Cardiac septum (tissue), 1 donor: ENCODE measurements at regions of chr1 and their contacts with region 1.

Region 1: GRCh38 chr1:221788466-221788865 is 46.6 kb upstream of the DUSP10 start:
- DNase-seq: no peak

Region 2: DNA sequence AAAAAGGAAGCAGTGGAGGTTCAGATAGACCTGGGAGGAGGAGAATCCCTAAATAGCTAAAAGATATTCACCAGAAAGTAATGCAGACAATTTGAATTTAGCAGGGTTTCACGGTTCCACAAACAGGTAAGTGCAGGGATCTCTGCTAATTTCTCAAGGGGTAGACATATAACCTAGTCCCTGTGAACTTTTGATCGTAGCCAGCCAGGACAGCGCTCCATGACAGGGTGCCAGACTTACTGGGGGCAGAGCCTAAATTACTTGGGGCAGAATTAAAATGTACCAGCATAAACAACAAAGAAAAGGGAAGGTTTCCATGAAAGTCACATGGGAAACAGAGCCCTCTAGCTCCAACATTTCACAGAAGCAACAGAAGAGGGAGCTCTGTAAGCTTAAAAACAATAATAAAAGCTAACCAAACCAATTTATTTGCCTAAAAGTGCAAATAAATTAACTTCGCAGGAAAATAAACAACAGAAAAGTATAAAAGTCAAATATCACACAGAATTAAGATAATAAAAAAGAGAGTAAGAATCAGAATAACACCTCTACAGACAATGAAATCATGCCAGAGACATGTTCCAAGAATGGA is 244.8 kb before region 1 on chr1:
- intact Hi-C with region 1: no loop called
- DNase-seq: no peak

Region 3: GRCh38 chr1:221715321-221716169 is 72.9 kb before region 1 on chr1:
- intact Hi-C with region 1: loop called (anchors 5 kb)
- DNase-seq: no peak